ENCODE measurements at regions of chr17 and their contacts with region 1.

Region 1: DNA sequence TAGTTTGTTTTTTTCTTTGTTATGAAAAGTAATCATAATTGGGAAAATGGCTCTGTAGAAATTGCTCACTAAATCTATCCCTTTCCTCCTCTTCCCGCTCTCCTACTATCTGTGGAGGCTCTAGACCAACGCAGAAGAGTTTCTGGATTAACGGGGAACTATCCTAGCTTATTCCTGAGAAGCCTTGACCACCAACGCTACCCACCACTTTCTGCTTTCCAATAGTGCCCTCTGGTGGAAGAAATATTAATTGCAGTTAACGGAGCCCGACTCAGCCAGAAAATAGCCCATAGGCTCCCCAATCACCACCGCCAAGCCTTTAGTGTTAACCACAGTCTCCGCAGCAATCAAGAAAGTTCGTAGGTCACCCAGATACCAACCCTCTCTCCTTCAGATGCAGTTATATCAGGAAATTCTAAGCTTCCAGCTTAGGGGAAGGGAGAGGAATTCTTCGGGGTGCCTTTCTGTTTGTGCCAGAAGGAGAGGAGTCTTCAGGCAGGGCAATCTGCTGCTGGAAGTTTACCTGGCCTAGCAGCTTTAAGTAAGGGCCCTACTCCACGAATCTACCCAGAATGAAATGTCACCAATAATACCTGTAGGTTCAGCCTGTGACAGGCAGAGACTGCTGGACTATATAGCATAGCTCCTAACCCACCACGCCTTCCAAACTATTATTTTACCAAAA is 23.0 kb upstream of the NSRP1 start:
- DNase-seq: peak in 2 of 5 donors; percentile 23 to 29
- ATAC-seq: peak; percentile 40 to 72 (median 68)
- H3K4me3 ChIP-seq: no peak overlapping the region
- H3K27ac ChIP-seq: no peak overlapping the region
- H3K4me1 ChIP-seq: peaks cover 0 to 15% (median 4%) of the 10 kb centered on the region in 12 donors
- H3K27me3 ChIP-seq: no peaks in the 10 kb centered on the region
- CTCF ChIP-seq: peak; percentile 73 to 92 (median 83)
- POLR2A ChIP-seq: no peak

Region 2: DNA sequence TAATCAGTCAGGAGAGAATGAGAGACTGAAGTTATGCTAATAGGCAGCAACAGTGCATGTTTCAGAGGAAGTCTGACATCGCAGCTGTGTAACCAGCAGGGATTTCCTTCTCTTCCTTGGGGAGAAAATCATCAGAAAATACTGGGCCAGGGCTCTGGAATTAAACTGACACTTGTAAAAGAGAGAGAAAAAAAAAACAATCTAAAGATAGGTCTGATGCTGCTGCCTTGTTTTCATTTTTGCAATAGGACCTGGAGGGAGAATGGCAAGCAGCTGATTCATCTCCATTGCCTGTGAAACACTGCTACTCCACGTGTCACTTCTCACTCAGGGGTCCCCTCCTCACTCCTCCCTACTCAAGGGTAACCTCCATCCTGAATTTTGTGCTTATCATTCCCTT is 453.2 kb before region 1 on chr17:
- intact Hi-C with region 1: loop called in 1 of 10 experiments (anchors 5 kb)
- DNase-seq: no peak
- ATAC-seq: peak in 3 of 4 donors; percentile 6 to 30 (median 15)
- H3K4me3 ChIP-seq: no peak overlapping the region
- H3K27ac ChIP-seq: peak overlapping the region; percentile 60 to 83 (median 76)
- H3K4me1 ChIP-seq: peaks cover 11 to 69% (median 66%) of the 10 kb centered on the region in 12 donors
- H3K27me3 ChIP-seq: no peaks in the 10 kb centered on the region
- CTCF ChIP-seq: no peak
- POLR2A ChIP-seq: no peak

Region 3: DNA sequence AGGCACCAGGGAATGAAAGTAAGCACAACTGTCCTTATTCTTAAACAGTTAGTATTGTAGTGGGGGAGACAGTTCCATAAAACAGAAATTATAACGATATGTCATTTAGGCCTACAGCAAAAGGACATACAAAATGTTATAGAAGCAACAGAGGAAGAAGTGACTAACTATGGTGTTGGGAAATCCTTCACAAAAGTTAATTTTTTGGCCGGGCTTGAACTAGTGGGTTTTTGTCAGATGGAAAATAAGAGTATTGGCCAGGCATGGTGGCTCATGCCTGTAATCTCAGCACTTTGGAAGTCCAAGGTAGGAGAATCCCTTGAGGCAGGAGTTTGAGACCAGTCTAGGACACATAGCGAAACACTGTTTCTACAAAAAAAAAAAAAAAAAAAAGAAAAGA is 291.4 kb before region 1 on chr17:
- intact Hi-C with region 1: loop called in 6 of 10 experiments (anchors 5 to 10 kb)
- DNase-seq: no peak
- ATAC-seq: no peak
- H3K4me3 ChIP-seq: no peak overlapping the region
- H3K27ac ChIP-seq: no peak overlapping the region
- H3K4me1 ChIP-seq: no peaks in the 10 kb centered on the region
- H3K27me3 ChIP-seq: no peaks in the 10 kb centered on the region
- CTCF ChIP-seq: no peak
- POLR2A ChIP-seq: no peak

Region 4: GRCh38 chr17:29807520-29808351 is 285.9 kb before region 1 on chr17:
- intact Hi-C with region 1: loop called in 6 of 10 experiments (anchors 5 to 10 kb)
- DNase-seq: peak in 4 of 5 donors; percentile 54 to 66 (median 60)
- ATAC-seq: peak in 3 of 4 donors; percentile 64 to 84 (median 72)
- H3K4me3 ChIP-seq: peak overlapping the region in 2 of 12 donors; percentile 18 to 36
- H3K27ac ChIP-seq: peak overlapping the region in 1 of 12 donors; percentile 60
- H3K4me1 ChIP-seq: peaks cover 0 to 4% (median 0%) of the 10 kb centered on the region in 12 donors
- H3K27me3 ChIP-seq: no peaks in the 10 kb centered on the region
- CTCF ChIP-seq: peak; percentile 63 to 88 (median 76)
- POLR2A ChIP-seq: no peak

Region 5: DNA sequence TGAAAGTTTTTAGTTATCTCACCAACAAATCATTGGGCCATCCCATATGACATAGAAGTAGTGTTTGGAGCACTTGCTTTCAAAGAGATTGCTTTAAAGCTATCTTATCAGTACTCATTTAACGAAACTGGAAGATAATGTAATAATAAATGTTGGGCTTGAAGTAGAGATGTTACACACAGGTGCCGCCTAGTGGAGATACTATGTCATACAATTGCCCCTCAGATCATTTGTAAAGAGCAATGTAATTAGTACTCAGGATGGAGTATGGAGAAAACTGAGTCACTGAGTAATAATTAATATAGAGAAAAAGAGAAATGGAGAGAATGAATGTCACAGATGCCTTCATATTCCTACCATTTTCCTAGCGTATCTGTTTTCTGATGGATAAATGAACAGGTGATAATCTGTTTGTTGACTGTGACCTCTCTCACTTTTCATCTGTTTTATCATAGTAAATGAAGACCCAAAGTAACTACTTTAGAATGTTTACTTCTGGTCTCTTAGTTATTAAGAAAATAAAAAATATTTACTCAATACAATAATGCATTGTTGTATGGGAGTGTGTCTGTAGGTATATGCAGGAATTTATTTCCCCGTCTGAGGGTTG is 71.8 kb before region 1 on chr17:
- intact Hi-C with region 1: loop called in 2 of 10 experiments (anchors 5 to 10 kb)
- DNase-seq: peak in 1 of 5 donors; percentile 9
- ATAC-seq: no peak
- H3K4me3 ChIP-seq: no peak overlapping the region
- H3K27ac ChIP-seq: no peak overlapping the region
- H3K4me1 ChIP-seq: peaks cover 0 to 3% (median 0%) of the 10 kb centered on the region in 12 donors
- H3K27me3 ChIP-seq: peaks cover 0 to 5% (median 0%) of the 10 kb centered on the region in 9 donors
- CTCF ChIP-seq: peak; percentile 60 to 80 (median 76)
- POLR2A ChIP-seq: no peak

Region 6: GRCh38 chr17:30031214-30031869 is 62.3 kb before region 1 on chr17:
- intact Hi-C with region 1: loop called in 4 of 10 experiments (anchors 5 to 10 kb)
- DNase-seq: no peak
- ATAC-seq: no peak
- H3K4me3 ChIP-seq: no peak overlapping the region
- H3K27ac ChIP-seq: no peak overlapping the region
- H3K4me1 ChIP-seq: no peaks in the 10 kb centered on the region
- H3K27me3 ChIP-seq: no peaks in the 10 kb centered on the region
- CTCF ChIP-seq: no peak
- POLR2A ChIP-seq: no peak